ENCODE measurements at regions of chr7 and their contacts with region 1.

Region 1: DNA sequence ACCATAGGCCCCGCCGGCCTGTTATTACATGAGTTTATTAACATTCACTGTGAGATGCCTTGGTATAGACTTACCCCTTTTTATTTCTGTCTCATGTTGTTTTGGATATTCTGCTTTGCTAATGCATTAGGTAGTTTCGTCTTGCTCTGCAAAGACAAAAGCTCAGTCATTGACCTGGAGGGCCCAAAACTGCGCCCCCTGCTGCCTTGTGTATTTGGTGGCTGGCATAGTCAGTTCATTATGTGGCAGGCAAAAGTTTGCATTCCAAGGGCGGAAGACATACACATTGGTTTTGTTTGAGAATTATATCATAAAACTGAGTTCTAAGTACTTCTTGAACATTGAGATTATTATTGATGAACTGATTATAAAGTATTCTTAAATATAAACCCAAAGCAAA is 372.5 kb downstream of the SDK1 start:
- DNase-seq: peak; percentile 67
- H3K4me3 ChIP-seq: no peak overlapping the region
- H3K27ac ChIP-seq: no peak overlapping the region
- H3K4me1 ChIP-seq: no peaks in the 10 kb centered on the region
- H3K27me3 ChIP-seq: no peaks in the 10 kb centered on the region
- CTCF ChIP-seq: peak in 2 of 3 experiments; percentile 19 to 20
- POLR2A ChIP-seq: no peak

Region 2: DNA sequence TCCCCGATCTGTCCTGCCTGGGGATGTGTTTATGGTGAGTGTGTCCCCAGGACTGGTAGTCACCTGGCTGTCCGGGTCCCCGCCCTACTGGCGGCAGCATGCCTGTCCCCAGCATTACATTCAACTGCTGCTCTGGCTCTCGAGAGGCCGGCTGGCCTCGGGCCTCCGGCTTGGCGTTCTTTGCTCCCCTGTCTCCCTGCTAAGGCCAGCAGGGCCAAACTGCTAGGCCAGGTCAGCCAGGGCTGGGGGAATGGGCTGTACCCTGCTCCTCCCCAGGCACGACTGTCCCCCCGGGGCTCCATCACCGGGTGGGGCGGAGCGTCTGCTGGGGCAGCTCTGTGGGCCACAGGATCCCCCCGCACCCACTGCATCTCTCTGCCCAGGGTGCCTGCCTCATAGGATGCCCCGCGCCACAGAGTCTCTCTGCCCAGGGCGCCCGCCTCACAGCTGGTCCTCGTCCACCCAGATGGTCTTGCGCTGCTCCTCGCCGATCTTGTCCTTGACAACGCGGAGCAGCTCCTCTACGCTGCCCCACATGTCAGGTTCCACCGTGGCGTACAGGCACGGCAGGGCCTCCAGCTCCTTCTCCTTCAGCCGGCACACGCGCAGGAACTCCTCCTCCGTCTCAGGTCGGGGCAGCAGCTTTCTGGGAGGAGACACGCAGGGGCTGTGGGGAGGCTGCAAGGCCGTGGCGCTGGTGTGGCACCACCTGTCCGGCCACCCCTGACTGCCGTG is 767.2 kb before region 1 on chr7:
- intact Hi-C with region 1: loop called (anchors 5 kb)
- DNase-seq: no peak
- H3K4me3 ChIP-seq: no peak overlapping the region
- H3K27ac ChIP-seq: no peak overlapping the region
- H3K4me1 ChIP-seq: no peaks in the 10 kb centered on the region
- H3K27me3 ChIP-seq: no peaks in the 10 kb centered on the region
- CTCF ChIP-seq: no peak
- POLR2A ChIP-seq: no peak

Measured in testis (tissue), 5 donors.